Activated B cell treated with CpG ODN at 0.5 μM for 24 hours (primary cell): ENCODE measurements at regions of chr19 and their contacts with region 1.

Region 1: DNA sequence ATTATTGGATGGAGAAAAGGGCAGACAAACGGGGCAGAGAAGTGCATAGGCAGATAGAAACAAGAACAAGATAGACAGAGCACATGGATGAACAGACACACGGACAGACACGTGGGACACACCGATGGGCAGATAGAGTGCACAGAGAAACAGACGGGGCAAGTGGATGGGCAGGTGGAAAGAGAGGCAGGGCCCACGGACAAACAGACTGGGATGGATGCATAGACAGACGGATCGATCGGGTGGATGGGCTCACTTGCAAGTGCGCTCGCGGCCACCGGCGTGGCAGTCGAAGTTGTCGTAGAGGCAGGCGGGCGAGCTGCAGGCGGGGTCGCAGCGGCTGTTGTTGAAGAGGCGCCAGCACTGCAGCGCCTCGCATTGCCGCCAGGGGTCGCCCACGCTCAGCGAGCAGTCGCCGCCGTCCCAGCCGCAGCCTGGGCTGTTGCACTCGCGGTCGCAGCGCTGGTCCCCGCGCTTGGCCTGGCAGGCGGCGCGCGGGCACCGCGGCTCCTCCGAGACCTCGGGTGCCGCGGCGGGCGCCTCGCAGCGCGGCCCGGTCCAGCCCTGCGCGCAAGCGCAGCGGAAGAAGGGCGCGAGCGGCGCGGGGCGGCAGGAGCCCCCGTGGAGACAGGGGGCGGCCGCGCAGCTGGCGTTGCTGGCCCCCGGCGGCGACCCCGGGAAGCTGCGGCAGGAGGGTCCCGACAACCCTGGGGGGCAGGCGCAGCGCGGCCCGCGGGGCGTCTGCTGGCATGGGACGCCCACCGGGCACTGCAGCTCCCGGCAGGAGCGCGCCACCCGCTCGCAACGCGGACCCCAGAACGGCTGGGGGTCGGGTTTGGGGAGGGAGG is 23.3 kb downstream of the NOTCH3 start:
- DNase-seq: peak; percentile 87
- ATAC-seq: peak; percentile 98
- H3K4me3 Mint-ChIP-seq: no peak overlapping the region
- H3K27ac Mint-ChIP-seq: no peak overlapping the region
- H3K4me1 Mint-ChIP-seq: peaks cover 4% of the 10 kb centered on the region
- H3K27me3 Mint-ChIP-seq: peaks cover 16% of the 10 kb centered on the region
- CTCF ChIP-seq: peak; percentile 80

Region 2: DNA sequence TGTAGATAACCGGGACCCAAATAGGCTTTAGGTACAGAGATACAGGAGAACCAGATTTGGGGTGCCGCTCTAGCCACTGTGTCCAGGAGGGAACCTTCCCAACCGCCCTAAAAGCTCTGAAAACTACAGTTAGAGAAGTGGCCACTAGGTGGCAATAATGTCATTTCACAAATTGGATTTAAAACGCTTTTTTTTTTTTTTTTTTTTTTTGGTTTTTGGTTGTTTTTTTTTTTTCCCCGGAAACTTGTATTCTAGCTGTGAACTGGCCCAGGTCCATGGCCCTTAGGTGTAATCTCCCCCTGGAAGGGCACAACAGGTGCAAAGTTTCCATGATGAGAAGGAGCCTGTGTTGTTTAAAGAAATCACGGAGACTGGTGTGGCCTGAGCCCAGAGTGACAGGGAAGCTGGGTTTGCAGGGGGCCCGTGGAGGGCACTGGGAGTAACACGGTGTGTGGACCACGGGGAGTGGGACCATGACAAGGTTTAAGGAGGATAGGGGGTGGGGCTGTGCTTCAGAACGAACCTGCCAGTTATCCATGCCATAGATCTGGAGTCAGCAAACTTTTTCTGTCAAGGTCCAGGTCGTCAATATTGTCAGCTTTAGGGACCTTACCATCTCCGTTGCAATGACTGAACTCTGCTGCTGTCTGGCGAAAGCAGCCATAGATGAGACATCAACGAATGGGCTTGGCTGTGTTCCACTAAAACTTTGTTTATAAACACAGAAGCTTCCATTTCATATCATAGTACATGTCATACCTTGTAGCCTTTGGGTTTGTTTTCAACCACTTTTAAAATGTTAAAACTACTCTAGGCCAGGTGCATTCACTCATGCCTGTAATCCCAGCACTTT is 85.4 kb before region 1 on chr19:
- CTCF ChIA-PET with region 1: no interaction called
- POLR2A ChIA-PET with region 1: no interaction called
- intact Hi-C with region 1: loop called (anchors 1 kb)
- DNase-seq: no peak
- ATAC-seq: peak; percentile 47
- H3K4me3 Mint-ChIP-seq: no peak overlapping the region
- H3K27ac Mint-ChIP-seq: no peak overlapping the region
- H3K4me1 Mint-ChIP-seq: peaks cover 3% of the 10 kb centered on the region
- H3K27me3 Mint-ChIP-seq: peaks cover 9% of the 10 kb centered on the region
- CTCF ChIP-seq: peak; percentile 59

Region 3: GRCh38 chr19:15234043-15234873 is 56.8 kb after region 1 on chr19:
- CTCF ChIA-PET with region 1: no interaction called
- POLR2A ChIA-PET with region 1: no interaction called
- intact Hi-C with region 1: loop called (anchors 10 kb)
- DNase-seq: no peak
- ATAC-seq: no peak
- H3K4me3 Mint-ChIP-seq: no peak overlapping the region
- H3K27ac Mint-ChIP-seq: no peak overlapping the region
- H3K4me1 Mint-ChIP-seq: peaks cover 26% of the 10 kb centered on the region
- H3K27me3 Mint-ChIP-seq: peaks cover 8% of the 10 kb centered on the region
- CTCF ChIP-seq: no peak

Region 4: GRCh38 chr19:15264061-15264932 is 86.8 kb after region 1 on chr19:
- CTCF ChIA-PET with region 1: no interaction called
- POLR2A ChIA-PET with region 1: no interaction called
- intact Hi-C with region 1: loop called (anchors 5 kb)
- DNase-seq: peak; percentile 72
- ATAC-seq: peak; percentile 76
- H3K4me3 Mint-ChIP-seq: no peak overlapping the region
- H3K27ac Mint-ChIP-seq: no peak overlapping the region
- H3K4me1 Mint-ChIP-seq: peaks cover 9% of the 10 kb centered on the region
- H3K27me3 Mint-ChIP-seq: no peaks in the 10 kb centered on the region
- CTCF ChIP-seq: peak; percentile 36